ENCODE measurements at regions of chr15 and their contacts with region 1.

Region 1: GRCh38 chr15:68304589-68305337 is 27.2 kb downstream of the FEM1B start:
- DNase-seq: no peak
- H3K4me3 ChIP-seq: no peak overlapping the region
- H3K27ac ChIP-seq: no peak overlapping the region
- H3K4me1 ChIP-seq: peaks cover 3% of the 10 kb centered on the region
- H3K27me3 ChIP-seq: no peaks in the 10 kb centered on the region
- CTCF ChIP-seq: no peak
- POLR2A ChIP-seq: no peak

Region 2: GRCh38 chr15:68277603-68278344 is 27.0 kb before region 1 on chr15 and contains the start of gene FEM1B:
- CTCF ChIA-PET with region 1: interaction called, 17 read pairs
- POLR2A ChIA-PET with region 1: no interaction called
- dilution Hi-C with region 1: no loop called
- intact Hi-C with region 1: no loop called
- DNase-seq: peak; percentile 92
- H3K4me3 ChIP-seq: peak within 1 kb of the TSS; percentile 39 to 85 (median 68)
- H3K27ac ChIP-seq: peak within 1 kb of the TSS; percentile 59
- H3K4me1 ChIP-seq: peaks cover 37% of the 10 kb centered on the region
- H3K27me3 ChIP-seq: no peaks in the 10 kb centered on the region
- CTCF ChIP-seq: peak in 1 of 2 donors; percentile 25
- POLR2A ChIP-seq: peak; percentile 12
- total RNA-seq, gene FEM1B: 33.2 TPM in 2 replicates

Region 3: GRCh38 chr15:68347392-68347791 is 42.6 kb after region 1 on chr15:
- CTCF ChIA-PET with region 1: interaction called, 27 read pairs
- POLR2A ChIA-PET with region 1: no interaction called
- dilution Hi-C with region 1: no loop called
- intact Hi-C with region 1: no loop called
- DNase-seq: peak; percentile 75
- H3K4me3 ChIP-seq: no peak overlapping the region
- H3K27ac ChIP-seq: peak overlapping the region; percentile 0
- H3K4me1 ChIP-seq: peaks cover 10% of the 10 kb centered on the region
- H3K27me3 ChIP-seq: no peaks in the 10 kb centered on the region
- CTCF ChIP-seq: no peak
- POLR2A ChIP-seq: no peak

Region 4: GRCh38 chr15:68383161-68384074 is 78.7 kb after region 1 on chr15:
- CTCF ChIA-PET with region 1: interaction called, 35 read pairs
- POLR2A ChIA-PET with region 1: no interaction called
- dilution Hi-C with region 1: no loop called
- intact Hi-C with region 1: loop called (anchors 1 kb)
- DNase-seq: peak; percentile 69
- H3K4me3 ChIP-seq: no peak overlapping the region
- H3K27ac ChIP-seq: peak overlapping the region; percentile 50
- H3K4me1 ChIP-seq: peaks cover 37% of the 10 kb centered on the region
- H3K27me3 ChIP-seq: no peaks in the 10 kb centered on the region
- CTCF ChIP-seq: peak; percentile 61 to 69
- POLR2A ChIP-seq: no peak

Region 5: GRCh38 chr15:68536331-68537095 is 231.8 kb after region 1 on chr15:
- CTCF ChIA-PET with region 1: interaction called, 10 read pairs
- POLR2A ChIA-PET with region 1: no interaction called
- dilution Hi-C with region 1: no loop called
- intact Hi-C with region 1: no loop called
- DNase-seq: no peak
- H3K4me3 ChIP-seq: no peak overlapping the region
- H3K27ac ChIP-seq: no peak overlapping the region
- H3K4me1 ChIP-seq: no peaks in the 10 kb centered on the region
- H3K27me3 ChIP-seq: no peaks in the 10 kb centered on the region
- CTCF ChIP-seq: no peak
- POLR2A ChIP-seq: no peak

Region 6: DNA sequence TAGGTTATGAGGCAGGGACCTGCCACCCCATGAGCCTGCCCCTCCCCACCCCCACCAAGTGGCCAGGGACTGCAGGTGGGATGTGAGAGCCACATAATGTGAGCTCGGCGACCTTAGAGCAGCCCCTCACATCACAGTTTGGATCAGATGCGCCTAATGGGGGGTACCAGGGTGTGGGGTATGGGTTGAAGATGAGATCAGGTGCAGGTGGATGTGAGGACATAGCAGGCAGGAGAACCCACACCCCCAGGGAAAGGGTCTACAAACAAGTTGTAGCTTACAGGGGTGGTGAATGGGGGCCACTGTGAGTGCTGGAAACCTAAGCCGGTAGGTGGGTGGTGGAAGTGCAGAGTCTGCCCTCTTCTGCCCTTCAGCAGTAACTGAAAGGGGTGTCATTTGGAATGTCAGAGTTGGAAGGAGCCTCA is 368.0 kb after region 1 on chr15:
- CTCF ChIA-PET with region 1: interaction called, 49 read pairs
- POLR2A ChIA-PET with region 1: no interaction called
- dilution Hi-C with region 1: no loop called
- intact Hi-C with region 1: loop called (anchors 1 kb)
- DNase-seq: no peak
- H3K4me3 ChIP-seq: no peak overlapping the region
- H3K27ac ChIP-seq: no peak overlapping the region
- H3K4me1 ChIP-seq: no peaks in the 10 kb centered on the region
- H3K27me3 ChIP-seq: peaks cover 0 to 10% of the 10 kb centered on the region in 2 experiments
- CTCF ChIP-seq: peak in 1 of 2 donors; percentile 30
- POLR2A ChIP-seq: no peak

Measured in endothelial cell of umbilical vein (primary cell).